Keratinocyte (primary cell): ENCODE measurements at regions of chr17 and their contacts with region 1.

Region 1: GRCh38 chr17:59440784-59441441 is 109.5 kb downstream of the YPEL2 start:
- DNase-seq: peak; percentile 35
- H3K4me3 ChIP-seq: no peak overlapping the region
- H3K27ac ChIP-seq: no peak overlapping the region
- H3K4me1 ChIP-seq: no peaks in the 10 kb centered on the region
- H3K27me3 ChIP-seq: no peaks in the 10 kb centered on the region
- CTCF ChIP-seq: peak; percentile 76 to 91 (median 88)

Region 2: GRCh38 chr17:59266751-59267150 is 174.2 kb before region 1 on chr17:
- dilution Hi-C with region 1: no loop called
- DNase-seq: no peak
- H3K4me3 ChIP-seq: no peak overlapping the region
- H3K27ac ChIP-seq: no peak overlapping the region
- H3K4me1 ChIP-seq: no peaks in the 10 kb centered on the region
- H3K27me3 ChIP-seq: no peaks in the 10 kb centered on the region
- CTCF ChIP-seq: no peak

Region 3: DNA sequence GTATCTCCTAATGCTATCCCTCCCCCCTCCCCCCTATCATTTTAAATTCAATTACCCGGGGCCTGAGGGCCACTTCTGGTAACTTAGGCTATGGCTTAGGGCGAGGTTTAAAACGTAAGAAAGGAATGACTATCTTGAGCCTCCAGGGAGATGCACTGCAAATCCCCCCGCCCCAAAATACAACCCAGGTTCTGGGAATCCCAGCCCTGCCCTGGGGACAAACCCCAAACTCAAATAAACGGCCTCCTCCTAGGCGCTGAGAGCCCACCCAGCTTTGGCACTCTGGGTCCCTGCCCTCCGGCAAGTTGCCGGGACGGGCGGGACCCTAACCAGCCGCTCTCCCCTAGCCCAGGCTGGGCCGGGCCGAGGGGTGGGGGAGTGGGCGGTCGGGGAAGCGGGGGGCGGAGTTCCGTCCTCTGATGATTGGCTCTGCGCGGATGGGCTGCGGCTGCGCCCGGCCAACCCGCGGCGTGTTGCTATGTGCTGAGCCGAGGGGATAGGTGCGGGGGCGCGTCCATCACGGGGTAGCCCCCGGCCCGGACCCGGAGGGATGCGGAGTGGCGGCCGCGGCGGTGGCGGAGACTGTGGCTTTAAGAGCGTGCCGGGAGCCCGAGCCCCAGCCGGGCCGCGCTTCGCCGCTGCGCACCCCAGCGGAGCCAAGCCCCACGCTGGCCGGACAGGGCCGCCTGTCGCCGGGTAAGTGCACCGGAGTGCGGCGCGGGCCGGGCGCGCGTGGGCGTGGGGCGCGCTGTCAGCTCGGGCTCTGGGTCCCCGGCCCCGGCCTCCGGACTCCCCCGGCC is 109.6 kb before region 1 on chr17 and contains the start of gene YPEL2:
- dilution Hi-C with region 1: loop called (anchors 25 kb)
- DNase-seq: no peak
- H3K4me3 ChIP-seq: peak within 1 kb of the TSS; percentile 67 to 88 (median 68)
- H3K27ac ChIP-seq: no peak within 1 kb of the TSS
- H3K4me1 ChIP-seq: peaks cover 9% of the 10 kb centered on the region
- H3K27me3 ChIP-seq: peaks cover 19% of the 10 kb centered on the region
- CTCF ChIP-seq: no peak
- polyA plus RNA-seq, gene YPEL2: 2.4 to 5.7 TPM (median 4.6 TPM) in 3 replicates

Region 4: DNA sequence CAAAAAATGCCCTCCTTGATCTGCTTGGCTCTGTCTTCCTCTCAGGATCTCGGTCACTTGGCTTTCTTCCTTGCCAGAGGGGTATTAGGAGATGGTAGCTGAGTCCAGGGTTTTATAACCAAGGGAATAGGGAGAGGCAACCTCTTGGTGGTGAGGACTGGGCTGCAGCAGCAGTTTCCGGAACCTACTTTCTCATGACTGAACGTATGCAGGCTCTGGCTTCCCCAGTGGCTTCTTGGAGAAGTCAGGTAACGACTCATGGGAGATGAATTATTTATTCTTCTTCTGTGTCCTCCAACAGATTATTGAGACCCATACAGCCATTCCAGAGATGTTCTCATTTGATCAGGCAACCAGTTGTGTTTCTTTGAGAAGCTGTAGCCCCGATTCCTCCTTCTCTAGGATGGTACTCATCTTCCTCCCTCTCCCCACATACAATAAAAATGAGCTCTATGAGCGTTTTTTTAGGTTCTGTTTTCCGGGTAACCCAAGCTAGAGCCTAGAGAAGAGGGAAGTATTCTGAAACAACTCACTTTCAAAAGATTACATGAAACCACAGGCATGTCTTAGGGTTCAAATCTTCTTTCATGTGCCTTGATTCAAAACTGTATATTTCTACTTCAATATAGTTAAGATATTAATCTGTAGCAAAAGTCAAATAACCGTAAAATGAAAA is 102.2 kb after region 1 on chr17:
- dilution Hi-C with region 1: no loop called
- DNase-seq: no peak
- H3K4me3 ChIP-seq: no peak overlapping the region
- H3K27ac ChIP-seq: no peak overlapping the region
- H3K4me1 ChIP-seq: no peaks in the 10 kb centered on the region
- H3K27me3 ChIP-seq: no peaks in the 10 kb centered on the region
- CTCF ChIP-seq: no peak